ENCODE measurements at regions of chr7 and their contacts with region 1.

Region 1: DNA sequence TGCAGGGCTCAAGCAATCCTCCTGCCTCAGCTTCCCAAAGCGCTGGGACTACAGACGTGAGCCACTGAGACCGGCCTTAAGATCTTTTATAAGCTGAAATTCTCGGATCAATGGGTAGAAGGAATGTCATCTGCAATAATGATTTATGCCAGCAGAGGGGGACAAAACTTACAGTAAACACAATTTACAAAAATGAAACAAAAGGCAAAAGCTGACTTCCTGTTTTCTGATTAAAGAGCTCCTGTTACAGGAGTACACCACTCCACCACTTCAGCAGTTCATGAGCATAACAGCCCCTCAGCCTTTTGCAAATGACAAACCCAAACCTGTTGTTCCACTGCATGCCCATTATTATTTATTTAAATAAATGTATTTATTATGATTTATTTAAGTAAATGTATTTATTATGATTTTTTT is 88.5 kb upstream of the ATP6V0A4 start:
- DNase-seq: peak; percentile 49
- H3K4me3 Mint-ChIP-seq: no peak overlapping the region
- H3K27ac Mint-ChIP-seq: peak overlapping the region; percentile 77
- H3K4me1 Mint-ChIP-seq: peaks cover 37% of the 10 kb centered on the region
- H3K27me3 Mint-ChIP-seq: peaks cover 15% of the 10 kb centered on the region

Region 2: GRCh38 chr7:138842111-138842510 is 44.4 kb before region 1 on chr7:
- CTCF ChIA-PET with region 1: no interaction called
- DNase-seq: no peak
- H3K4me3 Mint-ChIP-seq: no peak overlapping the region
- H3K27ac Mint-ChIP-seq: no peak overlapping the region
- H3K4me1 Mint-ChIP-seq: no peaks in the 10 kb centered on the region
- H3K27me3 Mint-ChIP-seq: peaks cover 25% of the 10 kb centered on the region

Region 3: GRCh38 chr7:138898255-138898654 is 11.7 kb after region 1 on chr7:
- CTCF ChIA-PET with region 1: interaction called, 24 read pairs
- DNase-seq: peak; percentile 35
- H3K4me3 Mint-ChIP-seq: peak overlapping the region; percentile 24
- H3K27ac Mint-ChIP-seq: peak overlapping the region; percentile 82
- H3K4me1 Mint-ChIP-seq: peaks cover 63% of the 10 kb centered on the region
- H3K27me3 Mint-ChIP-seq: peaks cover 16% of the 10 kb centered on the region

Region 4: DNA sequence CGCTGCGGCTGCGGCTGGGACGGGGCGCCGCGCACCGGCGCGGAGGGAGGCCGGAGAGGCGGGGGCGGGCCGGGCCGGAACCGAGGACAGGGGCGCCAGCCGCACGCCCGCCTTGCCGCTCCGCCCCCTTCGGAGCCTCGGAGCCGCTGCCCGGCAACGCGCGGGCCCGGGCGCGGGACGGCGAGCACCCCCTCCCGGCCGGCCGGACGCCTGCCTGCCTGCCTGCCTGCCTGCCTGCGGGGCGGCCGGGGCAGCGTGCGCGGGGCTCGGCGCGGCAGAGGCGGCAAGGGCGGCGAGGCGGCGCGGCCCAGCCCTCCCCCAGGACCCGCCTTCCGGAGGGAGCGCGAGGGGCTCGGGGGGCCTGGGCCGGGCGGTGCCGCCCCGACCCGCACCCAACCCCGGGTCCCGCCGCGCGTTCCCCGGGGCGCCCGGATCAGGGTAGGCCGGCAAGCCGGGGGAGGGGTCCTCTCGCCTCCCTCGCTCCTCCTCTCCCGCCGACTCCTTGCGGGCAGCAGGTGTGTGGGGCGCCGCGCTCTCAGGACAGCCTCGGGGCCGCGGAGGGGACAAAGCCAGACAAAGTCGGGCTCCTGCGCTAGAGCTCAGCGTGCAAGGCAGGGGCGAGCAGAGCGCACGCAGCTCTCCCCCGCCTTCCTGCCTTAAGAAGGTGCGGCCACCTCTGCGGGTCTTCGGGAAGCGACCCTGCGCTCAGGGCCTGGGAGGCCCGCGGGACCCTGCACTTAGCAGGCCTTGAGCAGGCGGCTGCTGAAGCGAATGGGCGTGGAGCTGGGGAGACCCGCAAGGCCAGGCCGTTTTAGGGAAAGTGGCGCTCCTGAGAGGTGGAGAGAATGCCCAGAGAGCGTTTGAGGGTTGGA is 95.1 kb after region 1 on chr7 and contains the start of gene KIAA1549:
- CTCF ChIA-PET with region 1: interaction called, 49 read pairs
- DNase-seq: peak; percentile 73
- H3K4me3 Mint-ChIP-seq: peak within 1 kb of the TSS; percentile 86
- H3K27ac Mint-ChIP-seq: peak within 1 kb of the TSS; percentile 5
- H3K4me1 Mint-ChIP-seq: peaks cover 13% of the 10 kb centered on the region
- H3K27me3 Mint-ChIP-seq: peaks cover 39% of the 10 kb centered on the region

Region 5: GRCh38 chr7:139004321-139005075 is 118.0 kb after region 1 on chr7:
- CTCF ChIA-PET with region 1: no interaction called
- DNase-seq: no peak
- H3K4me3 Mint-ChIP-seq: no peak overlapping the region
- H3K27ac Mint-ChIP-seq: no peak overlapping the region
- H3K4me1 Mint-ChIP-seq: peaks cover 6% of the 10 kb centered on the region
- H3K27me3 Mint-ChIP-seq: peaks cover 24% of the 10 kb centered on the region

Region 6: GRCh38 chr7:139058943-139059342 is 172.4 kb after region 1 on chr7:
- CTCF ChIA-PET with region 1: interaction called, 10 read pairs
- DNase-seq: no peak
- H3K4me3 Mint-ChIP-seq: no peak overlapping the region
- H3K27ac Mint-ChIP-seq: peak overlapping the region; percentile 46
- H3K4me1 Mint-ChIP-seq: peaks cover 53% of the 10 kb centered on the region
- H3K27me3 Mint-ChIP-seq: no peaks in the 10 kb centered on the region

Measured in activated naive CD4-positive, alpha-beta T cell treated with anti-CD3 and anti-CD28 coated beads, Interleukin-2, amount 10 ng/mL, durations not matched to agents 7 days and 5 days (primary cell).